Activated T-helper 1 cell treated with anti-CD3 and anti-CD28 coated beads, Interleukin-12 subunit alpha, Interleukin-12 subunit beta, Interleukin-2, Interleukin-4 antibody, amounts not matched to agents 30 ng/mL and 10 ng/mL and 1 ng/mL, durations not matched to agents 14 hours and 24 hours and 36 hours (primary cell): ENCODE measurements at regions of chr1 and their contacts with region 1.

Region 1: DNA sequence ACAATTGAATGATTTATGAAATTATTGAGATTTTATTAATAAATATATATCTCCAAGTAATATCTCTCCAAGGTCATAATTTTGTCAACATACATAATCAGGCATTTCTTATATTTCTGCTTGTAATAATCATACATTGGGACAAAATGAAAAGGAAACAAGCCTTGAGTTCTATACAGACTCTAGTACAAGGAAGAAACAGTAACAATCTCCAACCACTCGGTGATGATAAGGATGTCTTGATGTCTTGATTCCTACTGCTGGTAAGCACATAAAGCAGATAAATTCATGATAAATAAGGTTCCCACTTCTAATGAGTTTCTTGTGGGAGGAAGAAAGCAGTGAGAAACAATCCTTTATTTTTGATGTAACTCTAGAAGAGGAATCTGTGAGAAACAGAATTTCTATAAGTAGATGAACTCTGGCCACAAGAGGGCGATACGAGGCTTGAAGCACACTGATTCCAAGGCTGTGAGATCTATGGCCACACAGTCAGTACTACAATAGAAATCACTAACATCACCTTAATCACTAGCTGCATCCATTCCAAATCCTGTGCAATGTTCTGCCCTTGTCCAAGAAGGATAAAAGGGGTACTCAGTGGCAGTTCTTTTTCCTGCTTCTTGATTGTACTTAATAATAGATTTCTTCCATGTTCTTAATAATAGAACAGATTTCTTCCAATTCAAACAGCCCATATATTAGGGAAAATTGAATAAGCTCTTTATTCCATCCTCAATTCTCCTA is 41.4 kb upstream of the LRRC8B start:
- DNase-seq: peak; percentile 58
- H3K4me3 Mint-ChIP-seq: no peak overlapping the region
- H3K27ac Mint-ChIP-seq: no peak overlapping the region
- H3K4me1 Mint-ChIP-seq: peaks cover 25% of the 10 kb centered on the region
- H3K27me3 Mint-ChIP-seq: peaks cover 2% of the 10 kb centered on the region

Region 2: DNA sequence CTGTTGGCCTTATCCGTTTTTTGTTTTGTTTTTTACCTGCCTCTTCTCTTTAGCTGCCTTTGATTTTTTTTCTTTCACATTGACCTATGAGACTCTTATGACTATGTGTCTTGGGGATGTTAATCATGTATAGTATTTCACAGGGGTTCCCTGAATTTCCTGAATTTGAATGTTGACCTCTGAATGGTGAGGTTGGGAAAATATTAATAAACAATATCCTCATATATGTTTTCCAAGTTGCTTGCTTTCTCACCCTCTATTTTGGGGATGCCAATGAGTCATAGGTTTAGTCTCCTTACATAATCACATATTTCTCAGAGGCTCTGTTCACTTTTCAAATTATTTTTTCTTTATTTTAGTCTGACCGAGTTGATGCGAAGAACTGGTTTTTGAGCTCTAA is 240.1 kb before region 1 on chr1:
- intact Hi-C with region 1: no loop called
- DNase-seq: no peak
- H3K4me3 Mint-ChIP-seq: no peak overlapping the region
- H3K27ac Mint-ChIP-seq: no peak overlapping the region
- H3K4me1 Mint-ChIP-seq: peaks cover 24% of the 10 kb centered on the region
- H3K27me3 Mint-ChIP-seq: no peaks in the 10 kb centered on the region

Region 3: GRCh38 chr1:89465201-89465600 is 18.0 kb before region 1 on chr1:
- intact Hi-C with region 1: loop called (anchors 1 kb)
- DNase-seq: no peak
- H3K4me3 Mint-ChIP-seq: no peak overlapping the region
- H3K27ac Mint-ChIP-seq: no peak overlapping the region
- H3K4me1 Mint-ChIP-seq: peaks cover 40% of the 10 kb centered on the region
- H3K27me3 Mint-ChIP-seq: peaks cover 53% of the 10 kb centered on the region

Region 4: DNA sequence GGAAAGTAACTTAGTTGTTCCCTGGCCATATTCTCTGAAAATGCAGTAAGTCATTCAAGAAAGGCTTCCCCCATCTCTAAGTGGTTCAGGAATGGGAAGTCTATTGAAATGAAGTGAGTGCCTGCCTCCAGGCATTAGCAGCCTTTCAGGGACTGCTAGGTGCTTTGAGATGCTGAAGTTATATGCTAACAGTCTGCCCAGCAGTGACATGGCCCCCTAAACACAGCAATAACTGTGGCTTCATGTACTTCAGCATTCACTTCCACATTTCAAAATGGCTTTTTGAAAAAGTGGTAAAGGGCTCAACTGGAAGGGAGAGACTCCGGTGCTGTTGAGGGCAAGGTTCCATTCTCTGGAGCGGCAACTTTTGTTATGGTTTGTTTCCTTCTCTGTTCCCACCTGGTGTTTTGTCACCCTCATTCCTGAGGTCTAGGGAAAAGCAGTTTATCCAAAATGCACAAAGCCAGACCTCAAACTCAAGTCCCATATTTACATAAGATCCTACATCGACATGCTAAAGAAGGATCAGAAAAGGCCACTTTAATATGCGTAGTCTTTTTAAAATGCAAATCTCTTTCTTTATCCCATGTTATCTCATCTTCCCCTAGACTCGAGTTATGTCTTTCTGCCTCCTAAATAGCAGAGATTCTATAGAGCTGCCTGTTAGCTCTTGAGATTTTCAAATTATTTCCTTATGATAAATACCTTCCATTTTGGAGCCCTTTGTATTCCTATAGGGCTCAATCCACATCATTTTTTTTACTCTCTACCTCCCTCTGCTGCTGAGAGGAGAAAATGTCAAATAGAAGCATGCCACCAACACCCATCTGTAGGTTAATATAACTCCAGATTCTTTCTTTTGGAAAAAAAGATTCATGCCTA is 115.5 kb after region 1 on chr1:
- intact Hi-C with region 1: loop called (anchors 1 kb)
- DNase-seq: no peak
- H3K4me3 Mint-ChIP-seq: no peak overlapping the region
- H3K27ac Mint-ChIP-seq: peak overlapping the region; percentile 50
- H3K4me1 Mint-ChIP-seq: peaks cover 85% of the 10 kb centered on the region
- H3K27me3 Mint-ChIP-seq: no peaks in the 10 kb centered on the region

Region 5: DNA sequence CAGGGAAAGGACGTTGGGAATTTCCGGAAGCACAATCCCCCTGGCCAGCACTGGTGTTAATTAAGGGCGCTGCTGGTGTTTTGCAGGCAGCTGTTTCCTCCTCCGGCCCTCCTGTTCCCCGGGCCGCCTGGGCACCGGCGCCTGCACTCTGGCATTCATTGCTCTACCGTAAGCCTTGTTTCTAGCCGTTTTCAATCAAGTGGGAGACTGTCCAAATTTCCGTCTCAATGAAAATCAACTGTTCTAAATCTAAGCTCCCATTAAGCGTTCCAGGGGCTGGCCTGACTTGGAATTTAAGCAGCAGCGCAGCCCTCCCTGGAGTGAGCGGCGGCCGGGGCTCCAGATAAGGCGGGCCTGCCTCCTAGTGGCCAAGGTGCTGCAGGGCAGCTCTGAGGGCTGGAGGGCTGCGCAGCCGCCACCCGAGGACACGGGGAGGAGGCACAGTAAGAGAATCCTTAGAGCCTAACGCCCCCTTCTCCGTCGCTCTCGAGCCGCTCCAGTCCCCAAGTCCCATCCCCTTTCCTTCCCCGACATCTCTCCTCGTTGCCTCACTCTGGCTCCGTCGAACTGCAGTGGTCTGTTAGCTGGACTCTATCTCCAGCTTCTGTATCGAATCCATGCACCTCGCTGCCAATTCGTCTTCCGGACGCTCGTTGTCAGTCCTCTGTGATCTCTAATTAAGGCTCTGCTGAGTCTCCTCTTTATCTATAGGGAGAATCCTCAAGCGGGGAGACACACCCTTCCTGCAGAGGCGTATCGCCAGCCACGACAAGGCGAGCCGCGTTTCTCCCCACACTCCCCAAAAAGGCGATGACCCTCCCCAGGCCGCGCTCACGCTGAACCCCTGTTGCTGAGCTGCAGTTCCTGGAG is 279.8 kb after region 1 on chr1:
- intact Hi-C with region 1: loop called (anchors 1 kb)
- DNase-seq: peak; percentile 78
- H3K4me3 Mint-ChIP-seq: peak overlapping the region; percentile 92
- H3K27ac Mint-ChIP-seq: peak overlapping the region; percentile 93
- H3K4me1 Mint-ChIP-seq: peaks cover 63% of the 10 kb centered on the region
- H3K27me3 Mint-ChIP-seq: no peaks in the 10 kb centered on the region